Heart left ventricle (tissue), 16 donors: ENCODE measurements at regions of chr2 and their contacts with region 1.

Region 1: GRCh38 chr2:233375490-233376314 is 21.4 kb downstream of the DGKD start:
- DNase-seq: no peak
- ATAC-seq: no peak
- H3K4me3 ChIP-seq: no peak overlapping the region
- H3K27ac ChIP-seq: no peak overlapping the region
- H3K4me1 ChIP-seq: peaks cover 0 to 9% (median 0%) of the 10 kb centered on the region in 12 donors
- H3K27me3 ChIP-seq: no peaks in the 10 kb centered on the region
- CTCF ChIP-seq: no peak
- POLR2A ChIP-seq: no peak

Region 2: GRCh38 chr2:233387667-233388528 is 12.2 kb after region 1 on chr2:
- intact Hi-C with region 1: loop called in 1 of 10 experiments (anchors 1 kb)
- DNase-seq: peak; percentile 92 to 95 (median 94)
- ATAC-seq: peak; percentile 95 to 97 (median 96)
- H3K4me3 ChIP-seq: peak overlapping the region in 9 of 12 donors; percentile 1 to 35 (median 20)
- H3K27ac ChIP-seq: peak overlapping the region; percentile 82 to 93 (median 90)
- H3K4me1 ChIP-seq: peaks cover 11 to 52% (median 38%) of the 10 kb centered on the region in 12 donors
- H3K27me3 ChIP-seq: no peaks in the 10 kb centered on the region
- CTCF ChIP-seq: no peak
- POLR2A ChIP-seq: peak in 1 of 2 donors; percentile 20